HCT116 (cell line): ENCODE measurements at regions of chr1 and their contacts with region 1.

Region 1: DNA sequence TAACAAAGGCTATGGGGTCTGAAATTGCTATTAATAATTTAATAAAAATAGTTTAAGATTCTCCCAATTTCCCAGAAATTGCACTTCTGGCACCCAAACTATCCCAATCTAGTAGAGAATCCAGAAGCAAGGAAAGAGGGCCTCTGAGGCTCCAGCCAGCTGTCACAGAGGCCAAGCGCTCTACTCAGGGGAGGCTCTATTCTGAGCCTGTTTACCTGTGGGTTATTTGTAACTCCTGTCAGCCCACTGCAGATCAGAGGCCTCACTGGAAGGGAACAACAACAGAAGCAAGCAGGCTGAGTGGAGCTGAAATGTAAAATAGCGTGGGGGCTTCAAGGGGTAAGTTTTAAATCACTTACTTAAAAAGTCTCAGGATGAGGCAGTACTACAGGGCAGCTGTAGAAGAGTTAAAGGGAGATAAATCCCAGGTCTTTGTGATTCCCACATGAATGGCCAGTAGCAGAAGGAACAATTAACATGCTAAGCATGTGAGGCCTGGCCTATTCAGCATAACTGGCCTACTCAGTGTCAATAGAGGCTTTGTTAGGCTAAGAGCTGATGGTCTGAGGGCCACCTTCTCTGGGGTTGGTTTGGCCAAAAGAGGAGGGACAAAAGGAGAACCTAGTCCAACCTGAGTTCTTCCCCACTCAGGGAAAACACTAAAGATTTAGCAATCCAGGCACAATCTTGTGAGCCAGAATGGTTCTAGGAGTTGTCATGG is 12.8 kb downstream of the ZNF687 start:
- DNase-seq: no peak
- ATAC-seq: no peak
- H3K4me3 ChIP-seq: no peak overlapping the region
- H3K27ac ChIP-seq: no peak overlapping the region
- H3K4me1 ChIP-seq: no peaks in the 10 kb centered on the region
- H3K27me3 ChIP-seq: no peaks in the 10 kb centered on the region
- CTCF ChIP-seq: no peak
- POLR2A ChIP-seq: no peak
- RAD21 ChIP-seq: no peak

Region 2: GRCh38 chr1:151340870-151341754 is 46.2 kb after region 1 on chr1:
- CTCF ChIA-PET with region 1: interaction called, 131 read pairs
- POLR2A ChIA-PET with region 1: no interaction called
- RAD21 ChIA-PET with region 1: interaction called, 12 to 16 read pairs
- intact Hi-C with region 1: no loop called
- DNase-seq: peak; percentile 75
- ATAC-seq: peak; percentile 92
- H3K4me3 ChIP-seq: no peak overlapping the region
- H3K27ac ChIP-seq: peak overlapping the region; percentile 12; the same call in 1 of the 2 replicates
- H3K4me1 ChIP-seq: peaks cover 0 to 20% of the 10 kb centered on the region in 2 experiments; a peak in 2 of 4 replicates
- H3K27me3 ChIP-seq: no peaks in the 10 kb centered on the region
- CTCF ChIP-seq: peak; percentile 55 to 94 (median 82); a peak in 5 of 6 replicates
- POLR2A ChIP-seq: no peak
- RAD21 ChIP-seq: peak; percentile 95

Region 3: DNA sequence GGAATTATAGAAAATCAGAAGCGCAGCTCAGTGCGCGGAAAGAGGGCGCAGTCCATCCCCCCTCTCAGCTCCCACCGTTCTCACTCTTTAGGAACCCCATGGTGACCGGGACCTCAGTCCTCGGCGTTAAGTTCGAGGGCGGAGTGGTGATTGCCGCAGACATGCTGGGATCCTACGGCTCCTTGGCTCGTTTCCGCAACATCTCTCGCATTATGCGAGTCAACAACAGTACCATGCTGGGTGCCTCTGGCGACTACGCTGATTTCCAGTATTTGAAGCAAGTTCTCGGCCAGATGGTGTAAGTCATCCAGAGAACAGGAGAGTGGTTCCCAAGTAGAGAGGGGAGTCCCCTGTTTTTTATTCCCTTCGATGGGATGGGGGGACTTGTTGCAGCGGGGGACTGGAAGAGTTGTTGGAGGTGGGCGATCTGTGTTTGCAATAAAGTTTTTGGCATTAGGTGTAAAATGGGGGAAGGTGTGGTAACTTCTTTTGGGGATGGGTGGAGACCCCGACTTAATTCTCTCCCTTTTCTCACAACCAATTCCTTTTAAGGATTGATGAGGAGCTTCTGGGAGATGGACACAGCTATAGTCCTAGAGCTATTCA is 105.1 kb after region 1 on chr1:
- CTCF ChIA-PET with region 1: no interaction called
- POLR2A ChIA-PET with region 1: interaction called, 5 read pairs
- RAD21 ChIA-PET with region 1: no interaction called
- intact Hi-C with region 1: loop called (anchors 2 kb)
- DNase-seq: no peak
- ATAC-seq: peak; percentile 32
- H3K4me3 ChIP-seq: peak overlapping the region; percentile 86 to 98
- H3K27ac ChIP-seq: peak overlapping the region; percentile 81
- H3K4me1 ChIP-seq: peaks cover 4 to 26% of the 10 kb centered on the region in 2 experiments; a peak in 3 of 4 replicates
- H3K27me3 ChIP-seq: no peaks in the 10 kb centered on the region
- CTCF ChIP-seq: no peak
- POLR2A ChIP-seq: no peak
- RAD21 ChIP-seq: no peak